CD8-positive, alpha-beta T cell (primary cell): ENCODE measurements at regions of chr15 and their contacts with region 1.

Region 1: DNA sequence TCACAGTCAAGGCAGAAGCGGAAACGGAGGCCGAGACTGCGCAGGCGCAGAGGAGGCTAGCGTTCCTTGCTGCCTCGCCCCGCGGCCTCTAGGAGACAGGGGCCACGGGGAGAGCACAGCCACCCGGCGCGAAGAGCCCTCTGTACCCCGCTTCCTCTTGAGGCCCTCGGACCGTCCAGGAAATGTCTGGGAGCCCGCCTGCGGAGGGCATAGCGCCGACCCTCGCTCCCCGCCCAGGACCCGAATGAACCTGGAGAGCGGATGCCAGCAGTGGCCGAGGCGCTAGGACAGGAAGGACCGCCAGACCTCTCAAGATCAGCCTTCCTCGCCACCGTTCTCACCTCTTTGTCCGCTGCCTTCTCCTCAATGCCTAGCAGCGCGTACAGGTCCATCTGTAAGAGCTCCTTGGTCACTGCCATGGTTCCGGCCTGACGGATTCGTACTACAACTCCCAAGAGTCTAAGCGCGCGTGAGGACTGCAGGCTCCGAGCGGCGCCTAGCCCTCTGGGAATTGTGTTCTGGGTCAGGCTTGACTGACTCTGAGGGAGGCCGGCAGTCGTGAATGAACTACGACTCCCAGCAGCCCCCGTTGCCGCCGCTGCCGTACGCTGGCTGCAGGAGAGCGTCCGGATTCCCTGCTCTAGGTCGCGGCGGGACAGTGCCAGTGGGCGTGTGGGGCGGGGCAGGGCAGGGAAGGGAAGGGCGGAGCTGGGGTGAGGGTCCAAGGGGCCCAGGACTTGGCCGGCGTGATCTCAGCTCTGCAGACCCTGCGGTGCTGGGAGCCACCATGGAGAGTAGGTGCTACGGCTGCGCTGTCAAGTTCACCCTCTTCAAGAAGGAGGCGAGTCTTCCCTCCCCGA is at the starts of genes DNAJC17 and ZFYVE19:
- DNase-seq: peak; percentile 86 to 97 (median 94)
- ATAC-seq: peak; percentile 97
- H3K4me3 ChIP-seq: peak within 1 kb of the TSS; percentile 85 to 88
- H3K4me3 Mint-ChIP-seq: peak within 1 kb of the TSS; percentile 99
- H3K27ac ChIP-seq: peak within 1 kb of the TSS; percentile 69 to 87
- H3K27ac Mint-ChIP-seq: peak within 1 kb of the TSS; percentile 98
- H3K4me1 ChIP-seq: peaks cover 14% of the 10 kb centered on the region
- H3K4me1 Mint-ChIP-seq: peaks cover 26% of the 10 kb centered on the region
- H3K27me3 ChIP-seq: no peaks in the 10 kb centered on the region
- H3K27me3 Mint-ChIP-seq: no peaks in the 10 kb centered on the region
- CTCF ChIP-seq: peak; percentile 17
- total RNA-seq, gene DNAJC17: 11.2 to 11.9 TPM
- total RNA-seq, gene ZFYVE19: 9.6 to 11.0 TPM

Region 2: GRCh38 chr15:40564591-40565332 is 242.5 kb before region 1 on chr15 and contains the start of gene CCDC32:
- CTCF ChIA-PET with region 1: interaction called, 3 read pairs
- POLR2A ChIA-PET with region 1: no interaction called
- intact Hi-C with region 1: loop called (anchors 1 kb)
- DNase-seq: peak; percentile 84 to 99 (median 94)
- ATAC-seq: peak; percentile 90
- H3K4me3 ChIP-seq: peak within 1 kb of the TSS; percentile 89 to 97
- H3K4me3 Mint-ChIP-seq: peak within 1 kb of the TSS; percentile 95
- H3K27ac ChIP-seq: peak within 1 kb of the TSS; percentile 87 to 97
- H3K27ac Mint-ChIP-seq: peak within 1 kb of the TSS; percentile 97
- H3K4me1 ChIP-seq: peaks cover 11% of the 10 kb centered on the region
- H3K4me1 Mint-ChIP-seq: peaks cover 52% of the 10 kb centered on the region
- H3K27me3 ChIP-seq: no peaks in the 10 kb centered on the region
- H3K27me3 Mint-ChIP-seq: no peaks in the 10 kb centered on the region
- CTCF ChIP-seq: no peak
- total RNA-seq, gene CCDC32: 18.3 to 20.3 TPM

Region 3: GRCh38 chr15:40694688-40695468 is 112.4 kb before region 1 on chr15 and contains the start of gene RAD51:
- CTCF ChIA-PET with region 1: no interaction called
- POLR2A ChIA-PET with region 1: interaction called, 13 read pairs
- intact Hi-C with region 1: loop called (anchors 1 kb)
- DNase-seq: peak; percentile 82 to 96 (median 94)
- ATAC-seq: peak; percentile 94
- H3K4me3 ChIP-seq: peak within 1 kb of the TSS; percentile 84 to 94
- H3K4me3 Mint-ChIP-seq: peak within 1 kb of the TSS; percentile 99
- H3K27ac ChIP-seq: peak within 1 kb of the TSS; percentile 83 to 98
- H3K27ac Mint-ChIP-seq: peak within 1 kb of the TSS; percentile 99
- H3K4me1 ChIP-seq: peaks cover 12% of the 10 kb centered on the region
- H3K4me1 Mint-ChIP-seq: peaks cover 27% of the 10 kb centered on the region
- H3K27me3 ChIP-seq: no peaks in the 10 kb centered on the region
- H3K27me3 Mint-ChIP-seq: no peaks in the 10 kb centered on the region
- CTCF ChIP-seq: no peak
- total RNA-seq, gene RAD51: 1.3 to 1.5 TPM

Region 4: DNA sequence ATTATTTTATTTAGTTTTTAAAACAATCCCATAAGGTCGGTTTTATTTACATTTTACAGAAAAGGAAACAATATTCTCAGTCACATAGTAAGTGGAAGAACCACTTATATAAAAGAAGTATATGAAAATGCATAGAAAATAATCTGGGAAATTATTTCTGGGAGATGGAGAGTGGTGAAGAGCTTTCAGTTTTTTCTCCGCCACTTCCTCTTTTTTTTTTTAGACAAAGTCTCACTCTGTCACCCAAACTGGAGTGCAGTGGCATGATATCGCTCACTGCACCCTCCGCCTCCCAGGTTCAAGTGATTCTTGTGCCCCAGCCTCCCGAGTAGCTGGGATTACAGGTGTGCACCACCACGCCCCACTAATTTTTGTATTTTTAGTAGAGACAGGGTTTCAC is 91.1 kb before region 1 on chr15:
- CTCF ChIA-PET with region 1: no interaction called
- POLR2A ChIA-PET with region 1: no interaction called
- intact Hi-C with region 1: no loop called
- DNase-seq: no peak
- ATAC-seq: no peak
- H3K4me3 ChIP-seq: no peak overlapping the region
- H3K4me3 Mint-ChIP-seq: no peak overlapping the region
- H3K27ac ChIP-seq: no peak overlapping the region
- H3K27ac Mint-ChIP-seq: no peak overlapping the region
- H3K4me1 ChIP-seq: no peaks in the 10 kb centered on the region
- H3K4me1 Mint-ChIP-seq: no peaks in the 10 kb centered on the region
- H3K27me3 ChIP-seq: no peaks in the 10 kb centered on the region
- H3K27me3 Mint-ChIP-seq: no peaks in the 10 kb centered on the region
- CTCF ChIP-seq: no peak

Region 5: GRCh38 chr15:40769274-40770146 is 37.7 kb before region 1 on chr15 and contains the start of gene C15orf62:
- CTCF ChIA-PET with region 1: no interaction called
- POLR2A ChIA-PET with region 1: interaction called, 3 read pairs
- intact Hi-C with region 1: loop called in 1 of 2 experiments (anchors 2 kb)
- DNase-seq: peak in 8 of 9 experiments; percentile 44 to 82 (median 70)
- ATAC-seq: peak; percentile 58
- H3K4me3 ChIP-seq: peak within 1 kb of the TSS in 1 of 2 experiments; percentile 19
- H3K4me3 Mint-ChIP-seq: peak within 1 kb of the TSS; percentile 69
- H3K27ac ChIP-seq: peak within 1 kb of the TSS; percentile 35 to 66
- H3K27ac Mint-ChIP-seq: peak within 1 kb of the TSS; percentile 94
- H3K4me1 ChIP-seq: peaks cover 39% of the 10 kb centered on the region
- H3K4me1 Mint-ChIP-seq: peaks cover 41% of the 10 kb centered on the region
- H3K27me3 ChIP-seq: no peaks in the 10 kb centered on the region
- H3K27me3 Mint-ChIP-seq: no peaks in the 10 kb centered on the region
- CTCF ChIP-seq: no peak
- total RNA-seq, gene C15orf62: 1.0 to 1.1 TPM

Region 6: DNA sequence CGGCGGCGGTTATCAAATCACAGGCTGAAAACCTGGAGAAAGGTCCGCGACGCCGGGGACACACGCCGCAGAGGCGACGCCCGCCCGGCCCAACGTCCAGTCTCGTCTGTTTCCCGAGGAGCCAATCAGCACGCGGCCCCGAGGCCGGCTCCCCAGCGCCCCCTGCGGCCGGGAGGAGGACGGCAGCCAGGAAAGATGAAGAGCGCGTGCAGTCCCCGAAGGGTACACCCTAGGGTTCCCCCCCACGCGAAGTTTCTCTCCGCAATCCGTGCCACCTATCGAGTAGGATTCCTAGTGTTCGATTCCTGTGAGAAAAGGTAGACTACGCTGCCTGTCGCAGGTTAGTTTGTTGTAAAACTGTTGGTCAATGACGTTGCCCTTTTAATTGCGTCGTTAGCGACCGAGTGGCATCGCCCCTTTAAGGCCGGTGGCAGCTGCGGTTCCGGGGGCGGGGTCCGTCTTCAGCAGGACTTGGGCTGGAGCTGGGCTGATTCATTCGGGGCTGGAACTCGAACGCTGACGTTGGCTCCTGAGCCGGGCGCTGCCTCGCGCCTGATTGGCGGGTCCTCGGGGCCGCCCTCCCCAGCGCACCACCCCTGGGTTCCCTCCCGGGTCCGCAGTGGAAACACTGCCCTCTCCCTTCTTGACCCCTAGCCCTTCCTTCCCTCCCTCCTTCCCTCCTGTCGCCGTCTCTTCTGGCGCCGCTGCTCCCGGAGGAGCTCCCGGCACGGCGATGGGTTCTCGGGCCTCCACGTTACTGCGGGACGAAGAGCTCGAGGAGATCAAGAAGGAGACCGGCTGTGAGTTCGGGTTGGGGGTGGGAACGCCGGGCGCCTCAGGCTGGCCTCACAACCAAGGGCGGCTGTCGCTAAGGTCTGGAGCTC is 423.6 kb after region 1 on chr15 and contains the starts of genes CHP1 and EXD1:
- CTCF ChIA-PET with region 1: no interaction called
- POLR2A ChIA-PET with region 1: no interaction called
- intact Hi-C with region 1: loop called in 1 of 2 experiments (anchors 5 kb)
- DNase-seq: peak; percentile 89 to 97 (median 94)
- ATAC-seq: peak; percentile 95
- H3K4me3 ChIP-seq: peak within 1 kb of the TSS; percentile 83 to 89
- H3K4me3 Mint-ChIP-seq: peak within 1 kb of the TSS; percentile 89
- H3K27ac ChIP-seq: peak within 1 kb of the TSS; percentile 74 to 85
- H3K27ac Mint-ChIP-seq: peak within 1 kb of the TSS; percentile 90
- H3K4me1 ChIP-seq: peaks cover 27% of the 10 kb centered on the region
- H3K4me1 Mint-ChIP-seq: peaks cover 37% of the 10 kb centered on the region
- H3K27me3 ChIP-seq: no peaks in the 10 kb centered on the region
- H3K27me3 Mint-ChIP-seq: no peaks in the 10 kb centered on the region
- CTCF ChIP-seq: peak; percentile 99
- total RNA-seq, gene CHP1: 25.6 to 28.9 TPM
- total RNA-seq, gene EXD1: not detected

Region 7: GRCh38 chr15:41331833-41332787 is 524.9 kb after region 1 on chr15 and contains the start of gene OIP5:
- CTCF ChIA-PET with region 1: no interaction called
- POLR2A ChIA-PET with region 1: no interaction called
- intact Hi-C with region 1: loop called (anchors 2 kb)
- DNase-seq: peak; percentile 95 to 100 (median 96)
- ATAC-seq: peak; percentile 96
- H3K4me3 ChIP-seq: peak within 1 kb of the TSS; percentile 84 to 94
- H3K4me3 Mint-ChIP-seq: peak within 1 kb of the TSS; percentile 97
- H3K27ac ChIP-seq: peak within 1 kb of the TSS; percentile 46 to 63
- H3K27ac Mint-ChIP-seq: peak within 1 kb of the TSS; percentile 87
- H3K4me1 ChIP-seq: peaks cover 14% of the 10 kb centered on the region
- H3K4me1 Mint-ChIP-seq: peaks cover 30% of the 10 kb centered on the region
- H3K27me3 ChIP-seq: no peaks in the 10 kb centered on the region
- H3K27me3 Mint-ChIP-seq: no peaks in the 10 kb centered on the region
- CTCF ChIP-seq: peak; percentile 58
- total RNA-seq, gene OIP5: not detected